Sigmoid colon (tissue), 7 donors: ENCODE measurements at regions of chr10 and their contacts with region 1.

Region 1: GRCh38 chr10:50605269-50606263 is 18.2 kb downstream of the SGMS1 start:
- DNase-seq: peak; percentile 81
- H3K4me3 ChIP-seq: no peak overlapping the region
- H3K27ac ChIP-seq: peak overlapping the region; percentile 55 to 73 (median 70)
- H3K4me1 ChIP-seq: peaks cover 0 to 75% (median 61%) of the 10 kb centered on the region in 4 donors
- H3K27me3 ChIP-seq: no peaks in the 10 kb centered on the region
- CTCF ChIP-seq: no peak
- EP300 ChIP-seq: no peak
- POLR2A ChIP-seq: no peak

Region 2: DNA sequence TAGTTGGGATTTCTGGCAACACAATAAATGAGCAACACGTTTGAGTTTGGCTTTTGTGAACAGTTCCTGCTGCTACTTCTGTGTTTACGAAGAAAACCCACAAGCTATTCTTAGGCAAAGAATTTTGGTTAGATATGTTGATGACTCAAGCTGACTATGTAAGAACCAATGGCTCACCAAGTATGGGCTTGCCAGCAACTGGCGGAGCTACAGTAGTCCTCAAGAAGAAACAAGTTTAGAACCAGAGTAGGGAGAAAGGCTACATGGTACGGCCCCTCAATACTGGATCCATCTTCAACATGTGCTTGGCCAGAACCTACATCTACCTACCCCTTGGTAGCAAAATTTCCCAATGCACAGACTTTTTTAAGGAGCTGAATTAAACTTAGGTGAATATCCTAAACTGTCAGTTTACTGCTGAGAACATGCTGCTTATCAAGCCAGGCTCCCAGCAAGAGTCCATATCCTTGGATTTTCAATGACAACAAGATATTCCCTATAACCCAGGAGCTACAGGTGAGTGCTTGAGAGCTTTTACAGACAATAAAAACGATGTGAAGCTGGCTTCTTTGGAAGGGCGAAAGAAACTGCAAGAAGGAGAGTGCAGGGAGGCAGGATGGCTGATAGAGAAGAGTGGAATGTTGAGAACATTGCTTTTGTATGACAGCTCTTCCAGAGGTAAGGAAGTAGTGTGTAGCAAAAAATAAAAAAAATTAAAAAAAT is 280.0 kb before region 1 on chr10:
- intact Hi-C with region 1: loop called (anchors 5 kb)
- DNase-seq: peak; percentile 86
- H3K4me3 ChIP-seq: no peak overlapping the region
- H3K27ac ChIP-seq: peak overlapping the region; percentile 69 to 87 (median 78)
- H3K4me1 ChIP-seq: peaks cover 0 to 49% (median 39%) of the 10 kb centered on the region in 4 donors
- H3K27me3 ChIP-seq: no peaks in the 10 kb centered on the region
- CTCF ChIP-seq: no peak
- EP300 ChIP-seq: peak in 1 of 4 donors; percentile 27
- POLR2A ChIP-seq: no peak

Region 3: DNA sequence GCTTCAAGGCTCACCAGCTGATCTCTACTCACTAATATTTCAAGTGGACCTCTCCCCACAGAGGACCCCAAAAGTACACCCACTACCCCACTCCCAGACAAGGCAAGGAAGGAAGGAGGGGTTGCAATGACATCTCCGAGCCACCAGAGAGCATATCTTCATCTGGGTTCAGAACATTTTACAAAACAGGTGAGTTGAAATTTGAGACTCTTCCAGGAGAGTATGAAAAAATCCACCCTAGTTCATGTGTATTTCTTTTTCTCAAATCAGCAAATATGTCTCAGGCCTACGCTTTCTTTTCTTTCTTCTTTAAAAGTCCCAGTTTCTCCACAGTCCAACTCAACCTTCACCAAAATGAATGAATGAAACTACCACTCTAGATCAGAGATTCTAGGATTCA is 43.8 kb before region 1 on chr10:
- intact Hi-C with region 1: loop called (anchors 5 kb)
- DNase-seq: no peak
- H3K4me3 ChIP-seq: no peak overlapping the region
- H3K27ac ChIP-seq: peak overlapping the region; percentile 0 to 76 (median 54)
- H3K4me1 ChIP-seq: peaks cover 0 to 57% (median 30%) of the 10 kb centered on the region in 4 donors
- H3K27me3 ChIP-seq: no peaks in the 10 kb centered on the region
- CTCF ChIP-seq: peak; percentile 17 to 50 (median 44)
- EP300 ChIP-seq: no peak
- POLR2A ChIP-seq: no peak